ENCODE measurements at regions of chr1 and their contacts with region 1.

Region 1: GRCh38 chr1:206635080-206635977 is at the start of gene DYRK3:
- DNase-seq: peak; percentile 96
- H3K4me3 ChIP-seq: peak within 1 kb of the TSS; percentile 96
- H3K27ac ChIP-seq: peak within 1 kb of the TSS; percentile 69
- H3K4me1 ChIP-seq: peaks cover 38% of the 10 kb centered on the region
- H3K27me3 ChIP-seq: no peaks in the 10 kb centered on the region
- CTCF ChIP-seq: no peak; the same call in 1 of the 2 replicates
- total RNA-seq, gene DYRK3: 18.7 and 24.0 TPM in 2 replicates

Region 2: DNA sequence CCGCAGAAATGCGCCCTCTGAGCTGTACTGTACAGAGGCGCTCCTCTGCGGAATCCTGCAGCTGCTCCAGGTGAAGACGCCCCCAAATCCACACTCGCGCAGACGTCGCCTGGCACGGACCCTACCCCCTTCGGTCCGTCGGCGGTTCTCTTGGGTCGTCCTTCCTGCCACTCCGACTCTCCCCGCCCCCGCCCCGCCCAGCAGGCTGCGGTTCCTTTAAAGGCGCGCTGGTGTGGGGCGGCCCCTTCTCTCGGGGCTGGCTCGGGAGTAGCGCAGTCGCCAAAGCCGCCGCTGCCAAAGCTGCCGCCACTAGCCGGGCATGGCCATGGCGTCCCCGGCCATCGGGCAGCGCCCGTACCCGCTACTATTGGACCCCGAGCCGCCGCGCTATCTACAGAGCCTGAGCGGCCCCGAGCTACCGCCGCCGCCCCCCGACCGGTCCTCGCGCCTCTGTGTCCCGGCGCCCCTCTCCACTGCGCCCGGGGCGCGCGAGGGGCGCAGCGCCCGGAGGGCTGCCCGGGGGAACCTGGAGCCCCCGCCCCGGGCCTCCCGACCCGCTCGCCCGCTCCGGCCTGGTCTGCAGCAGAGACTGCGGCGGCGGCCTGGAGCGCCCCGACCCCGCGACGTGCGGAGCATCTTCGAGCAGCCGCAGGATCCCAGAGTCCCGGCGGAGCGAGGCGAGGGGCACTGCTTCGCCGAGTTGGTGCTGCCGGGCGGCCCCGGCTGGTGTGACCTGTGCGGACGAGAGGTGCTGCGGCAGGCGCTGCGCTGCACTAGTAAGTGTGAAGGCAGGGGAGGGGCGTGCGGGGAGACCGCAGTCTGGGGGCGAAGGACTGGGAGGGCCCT is 127.8 kb before region 1 on chr1 and contains the start of gene RASSF5:
- CTCF ChIA-PET with region 1: no interaction called
- POLR2A ChIA-PET with region 1: no interaction called
- intact Hi-C with region 1: no loop called
- DNase-seq: peak; percentile 57
- H3K4me3 ChIP-seq: peak within 1 kb of the TSS; percentile 42
- H3K27ac ChIP-seq: no peak within 1 kb of the TSS
- H3K4me1 ChIP-seq: peaks cover 16% of the 10 kb centered on the region
- H3K27me3 ChIP-seq: peaks cover 46% of the 10 kb centered on the region
- CTCF ChIP-seq: no peak
- total RNA-seq, gene RASSF5: 0.75 and 1.3 TPM in 2 replicates

Region 3: DNA sequence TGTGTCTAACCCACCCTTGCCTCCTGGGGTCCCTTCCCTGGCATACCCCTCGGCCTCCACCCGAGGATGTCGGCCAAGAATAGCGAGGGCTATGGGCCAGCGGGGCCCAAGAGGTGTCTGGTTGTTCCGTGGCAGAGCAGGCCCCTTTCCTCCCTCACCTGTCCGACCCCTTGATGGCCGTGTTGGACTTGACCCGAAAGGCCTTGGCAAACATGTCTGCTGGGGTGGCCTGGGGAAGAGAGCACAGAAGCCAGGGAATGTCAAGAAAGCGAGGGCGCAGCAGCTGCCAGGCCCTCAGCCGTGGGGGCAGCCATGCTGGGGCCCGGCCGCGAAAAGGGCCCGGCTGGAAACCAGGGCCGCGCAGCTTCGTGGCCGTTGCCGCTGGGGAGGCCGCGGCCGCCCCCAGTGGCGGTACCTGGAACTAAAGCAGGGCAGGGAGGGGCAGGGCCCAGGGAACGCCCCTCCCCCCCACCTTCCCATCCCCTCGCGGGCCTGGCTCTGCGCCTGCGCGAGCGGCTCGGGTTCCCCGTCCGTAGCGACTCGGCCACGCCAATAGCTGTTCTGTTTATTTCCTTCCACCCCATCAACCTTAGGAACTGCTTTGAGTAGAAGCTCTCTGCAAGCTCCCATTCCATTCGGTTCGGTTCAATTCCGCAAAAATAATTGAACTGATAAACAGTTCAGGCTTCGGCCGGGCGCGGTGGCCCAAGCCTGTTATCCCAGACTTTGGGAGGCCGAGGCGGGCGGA is 23.0 kb before region 1 on chr1 and contains the start of gene EIF2D:
- CTCF ChIA-PET with region 1: interaction called, 11 read pairs
- POLR2A ChIA-PET with region 1: no interaction called
- intact Hi-C with region 1: no loop called
- DNase-seq: peak; percentile 96
- H3K4me3 ChIP-seq: peak within 1 kb of the TSS; percentile 97
- H3K27ac ChIP-seq: peak within 1 kb of the TSS; percentile 95
- H3K4me1 ChIP-seq: peaks cover 6% of the 10 kb centered on the region
- H3K27me3 ChIP-seq: no peaks in the 10 kb centered on the region
- CTCF ChIP-seq: peak; percentile 96
- total RNA-seq, gene EIF2D: 32.6 and 32.7 TPM in 2 replicates

Region 4: GRCh38 chr1:206982216-206982615 is 346.9 kb after region 1 on chr1:
- CTCF ChIA-PET with region 1: no interaction called
- POLR2A ChIA-PET with region 1: no interaction called
- intact Hi-C with region 1: loop called (anchors 10 kb)
- DNase-seq: peak; percentile 31
- H3K4me3 ChIP-seq: no peak overlapping the region
- H3K27ac ChIP-seq: no peak overlapping the region
- H3K4me1 ChIP-seq: no peaks in the 10 kb centered on the region
- H3K27me3 ChIP-seq: peaks cover 53% of the 10 kb centered on the region
- CTCF ChIP-seq: peak; percentile 56

Measured in A673 (cell line).